Mucosa of descending colon (tissue), 3 donors: ENCODE measurements at regions of chr3 and their contacts with region 1.

Region 1: GRCh38 chr3:113051302-113051711 is 60.5 kb downstream of the GTPBP8 start:
- DNase-seq: peak; percentile 56 to 95 (median 73)
- ATAC-seq: peak; percentile 100
- H3K4me3 ChIP-seq: no peak overlapping the region
- H3K4me1 ChIP-seq: no peaks in the 10 kb centered on the region
- CTCF ChIP-seq: peak; percentile 82

Region 2: GRCh38 chr3:113275929-113276750 is 224.8 kb after region 1 on chr3:
- intact Hi-C with region 1: loop called in 1 of 2 experiments (anchors 5 kb)
- DNase-seq: no peak
- ATAC-seq: peak; percentile 24
- H3K4me3 ChIP-seq: no peak overlapping the region
- H3K4me1 ChIP-seq: no peaks in the 10 kb centered on the region
- CTCF ChIP-seq: no peak